ENCODE measurements at regions of chr2 and their contacts with region 1.

Region 1: DNA sequence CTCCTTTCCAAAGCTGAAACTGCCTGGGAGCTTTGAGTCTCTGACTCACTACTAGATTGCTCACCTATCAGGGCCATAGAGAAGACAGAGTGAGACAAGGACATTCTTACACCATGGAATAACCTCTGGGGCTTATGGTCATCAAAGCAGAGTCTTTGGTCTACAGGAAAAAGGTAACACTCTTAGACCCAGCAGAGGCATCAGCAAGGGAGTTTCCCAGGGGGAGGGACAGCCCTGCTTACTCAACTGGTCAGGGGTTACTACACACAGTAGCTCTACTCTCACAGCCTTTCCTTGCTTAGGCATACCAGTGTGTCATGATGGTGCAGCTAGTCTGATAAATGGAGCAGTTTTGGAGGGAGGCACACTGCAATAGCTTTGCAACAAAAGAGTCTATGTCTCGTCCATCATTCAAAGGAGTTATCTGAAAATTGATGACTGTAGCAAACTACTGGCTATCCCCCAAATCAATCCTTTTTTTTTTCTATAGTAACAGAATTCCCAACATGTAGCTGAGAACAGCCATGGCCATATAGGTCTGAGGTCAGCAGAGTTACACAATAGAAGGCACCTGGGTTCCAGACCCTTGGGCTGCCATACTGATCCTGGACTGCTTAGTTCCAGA is 22.4 kb upstream of the CD28 start:
- DNase-seq: peak in 1 of 2 donors; percentile 51
- ATAC-seq: peak; percentile 62 to 79 (median 66)
- H3K4me3 ChIP-seq: no peak overlapping the region
- H3K27ac ChIP-seq: peak overlapping the region; percentile 78
- H3K4me1 ChIP-seq: peaks cover 76% of the 10 kb centered on the region
- H3K27me3 ChIP-seq: no peaks in the 10 kb centered on the region
- CTCF ChIP-seq: no peak

Region 2: DNA sequence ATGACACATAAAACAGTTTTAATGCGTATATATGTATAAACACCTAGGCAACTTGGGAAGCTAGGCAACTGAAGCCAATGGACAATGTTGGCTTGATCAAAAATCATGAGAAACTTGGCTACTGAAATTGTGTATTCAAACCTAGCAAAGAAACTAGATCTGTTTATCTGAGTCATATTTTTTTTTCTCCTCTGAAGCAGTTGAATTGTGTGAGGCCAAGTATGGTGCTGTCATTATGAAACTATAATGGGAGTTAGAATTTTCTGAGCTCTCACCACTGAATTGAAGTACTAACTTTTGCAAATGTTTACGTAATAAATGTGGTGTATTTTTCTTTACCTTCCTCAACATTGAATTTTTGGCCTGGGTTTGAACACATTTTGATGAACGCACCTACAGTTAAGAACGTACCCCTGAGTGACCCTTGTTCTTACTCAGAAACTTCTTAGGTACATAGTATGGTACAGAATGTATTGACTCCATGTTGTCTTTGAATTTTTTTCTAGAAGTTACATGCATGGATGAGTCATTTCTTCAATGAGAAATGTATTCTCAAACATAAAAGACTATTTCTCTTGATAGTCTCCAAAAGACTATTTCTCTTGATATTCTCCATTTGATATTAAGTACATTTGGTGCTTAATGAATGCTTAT is 46.2 kb after region 1 on chr2:
- intact Hi-C with region 1: loop called in 1 of 2 experiments (anchors 5 kb)
- DNase-seq: no peak
- ATAC-seq: no peak
- H3K4me3 ChIP-seq: no peak overlapping the region
- H3K27ac ChIP-seq: no peak overlapping the region
- H3K4me1 ChIP-seq: peaks cover 33% of the 10 kb centered on the region
- H3K27me3 ChIP-seq: no peaks in the 10 kb centered on the region
- CTCF ChIP-seq: no peak

Region 3: GRCh38 chr2:203909261-203909967 is 225.4 kb after region 1 on chr2:
- intact Hi-C with region 1: loop called in 1 of 2 experiments (anchors 10 kb)
- DNase-seq: no peak
- ATAC-seq: peak; percentile 70 to 87 (median 76)
- H3K4me3 ChIP-seq: peak overlapping the region; percentile 45
- H3K27ac ChIP-seq: peak overlapping the region; percentile 27
- H3K4me1 ChIP-seq: peaks cover 11% of the 10 kb centered on the region
- H3K27me3 ChIP-seq: no peaks in the 10 kb centered on the region
- CTCF ChIP-seq: peak; percentile 85

Measured in psoas muscle (tissue), 8 donors.